T-cell (primary cell): ENCODE measurements at regions of chr3 and their contacts with region 1.

Region 1: DNA sequence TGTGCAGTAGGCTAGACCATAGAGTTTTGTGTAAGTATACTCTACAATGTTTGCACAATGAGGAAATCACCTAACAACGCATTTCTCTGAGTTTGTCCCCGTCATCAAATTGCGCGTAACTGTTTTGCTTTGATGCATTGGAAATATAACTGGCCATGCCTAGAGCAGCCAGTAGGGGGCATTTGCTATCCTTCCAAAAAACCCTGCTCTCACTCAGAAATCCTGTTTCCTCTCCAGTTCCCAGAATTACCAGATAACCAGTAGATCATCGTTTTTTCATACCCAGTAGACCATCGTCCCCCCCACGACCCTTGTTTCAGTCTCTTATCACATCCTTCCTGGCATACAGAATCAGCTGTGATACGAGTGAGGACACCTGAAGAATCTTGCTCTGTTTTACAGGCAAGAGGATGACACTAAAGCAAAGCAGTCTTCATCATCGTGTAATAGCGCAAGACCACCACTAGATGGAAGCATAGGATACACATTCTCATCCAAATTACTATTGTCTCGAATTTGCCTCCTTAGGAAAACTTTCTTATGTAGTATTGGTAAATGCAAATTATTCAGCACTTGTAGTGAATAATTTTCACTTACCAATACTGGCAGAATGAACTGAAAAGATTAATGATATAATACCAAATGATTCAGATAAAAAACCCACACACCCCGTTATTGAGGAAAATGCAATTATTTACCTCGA is 4.4 kb upstream of the GABRR3 start:
- DNase-seq: peak; percentile 44 to 89 (median 69)
- ATAC-seq: peak; percentile 93 to 98 (median 97)
- H3K4me3 ChIP-seq: peak overlapping the region; percentile 38 to 54
- H3K4me3 Mint-ChIP-seq: peak overlapping the region; percentile 61 to 81 (median 69)
- H3K27ac ChIP-seq: peak overlapping the region; percentile 78
- H3K27ac Mint-ChIP-seq: peak overlapping the region; percentile 40 to 79
- H3K4me1 ChIP-seq: no peaks in the 10 kb centered on the region
- H3K4me1 Mint-ChIP-seq: peaks cover 0 to 7% (median 2%) of the 10 kb centered on the region in 3 donors
- H3K27me3 ChIP-seq: no peaks in the 10 kb centered on the region
- H3K27me3 Mint-ChIP-seq: peaks cover 13 to 15% of the 10 kb centered on the region in 2 donors

Region 2: GRCh38 chr3:98073486-98073885 is 34.0 kb after region 1 on chr3:
- CTCF ChIA-PET with region 1: no interaction called
- POLR2A ChIA-PET with region 1: no interaction called
- DNase-seq: no peak
- ATAC-seq: no peak
- H3K4me3 ChIP-seq: no peak overlapping the region
- H3K4me3 Mint-ChIP-seq: no peak overlapping the region
- H3K27ac ChIP-seq: no peak overlapping the region
- H3K27ac Mint-ChIP-seq: no peak overlapping the region
- H3K4me1 ChIP-seq: no peaks in the 10 kb centered on the region
- H3K4me1 Mint-ChIP-seq: no peaks in the 10 kb centered on the region
- H3K27me3 ChIP-seq: no peaks in the 10 kb centered on the region
- H3K27me3 Mint-ChIP-seq: peaks cover 0 to 17% of the 10 kb centered on the region in 2 donors

Region 3: GRCh38 chr3:98329392-98330124 is 290.1 kb after region 1 on chr3:
- CTCF ChIA-PET with region 1: interaction called, 10 to 12 read pairs
- POLR2A ChIA-PET with region 1: no interaction called
- DNase-seq: peak in 30 of 35 experiments; percentile 4 to 67 (median 24)
- ATAC-seq: peak; percentile 54 to 75 (median 72)
- H3K4me3 ChIP-seq: no peak overlapping the region
- H3K4me3 Mint-ChIP-seq: no peak overlapping the region
- H3K27ac ChIP-seq: no peak overlapping the region
- H3K27ac Mint-ChIP-seq: no peak overlapping the region
- H3K4me1 ChIP-seq: peaks cover 0 to 6% of the 10 kb centered on the region in 2 experiments
- H3K4me1 Mint-ChIP-seq: no peaks in the 10 kb centered on the region
- H3K27me3 ChIP-seq: peaks cover 0 to 9% of the 10 kb centered on the region in 2 experiments
- H3K27me3 Mint-ChIP-seq: peaks cover 20 to 40% of the 10 kb centered on the region in 2 donors